B cell (primary cell): ENCODE measurements at regions of chr18 and their contacts with region 1.

Region 1: DNA sequence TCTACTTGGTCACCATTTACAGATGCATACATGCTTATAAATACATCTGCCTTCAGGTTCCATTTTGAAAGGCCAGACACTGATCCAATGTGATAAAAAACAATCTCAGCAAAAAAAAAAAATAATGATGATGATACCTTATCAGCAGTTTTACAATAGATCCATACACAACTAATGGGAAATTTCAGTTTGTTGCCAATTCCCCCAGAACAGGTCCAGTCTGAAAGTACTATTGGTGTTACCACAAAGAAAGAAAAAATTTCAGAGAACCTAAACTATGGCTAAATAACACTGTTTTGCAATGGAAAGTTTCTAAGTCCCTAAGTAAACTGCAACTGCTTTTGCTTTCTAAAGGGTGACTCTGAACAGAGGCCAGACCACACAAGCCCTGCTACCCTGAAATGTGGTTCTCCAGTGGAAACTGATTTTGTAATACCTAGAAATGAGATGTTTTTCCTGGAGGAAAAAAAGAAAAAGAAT is 54.1 kb downstream of the LPIN2 start:
- DNase-seq: peak; percentile 30
- ATAC-seq: peak; percentile 15
- H3K4me3 ChIP-seq: peak overlapping the region in 1 of 5 experiments; percentile 42
- H3K4me3 Mint-ChIP-seq: peak overlapping the region; percentile 50
- H3K27ac ChIP-seq: peak overlapping the region; percentile 82 to 84
- H3K27ac Mint-ChIP-seq: peak overlapping the region; percentile 91
- H3K4me1 ChIP-seq: peaks cover 70 to 75% of the 10 kb centered on the region in 2 donors
- H3K4me1 Mint-ChIP-seq: peaks cover 74% of the 10 kb centered on the region
- H3K27me3 ChIP-seq: no peaks in the 10 kb centered on the region
- H3K27me3 Mint-ChIP-seq: no peaks in the 10 kb centered on the region
- CTCF ChIP-seq: no peak

Region 2: GRCh38 chr18:2920546-2921343 is 38.1 kb before region 1 on chr18:
- CTCF ChIA-PET with region 1: no interaction called
- POLR2A ChIA-PET with region 1: no interaction called
- intact Hi-C with region 1: no loop called
- DNase-seq: no peak
- ATAC-seq: no peak
- H3K4me3 ChIP-seq: no peak overlapping the region
- H3K4me3 Mint-ChIP-seq: no peak overlapping the region
- H3K27ac ChIP-seq: no peak overlapping the region
- H3K27ac Mint-ChIP-seq: peak overlapping the region; percentile 32
- H3K4me1 ChIP-seq: peaks cover 21 to 26% of the 10 kb centered on the region in 2 donors
- H3K4me1 Mint-ChIP-seq: peaks cover 28% of the 10 kb centered on the region
- H3K27me3 ChIP-seq: no peaks in the 10 kb centered on the region
- H3K27me3 Mint-ChIP-seq: no peaks in the 10 kb centered on the region
- CTCF ChIP-seq: no peak

Region 3: GRCh38 chr18:2932247-2933181 is 26.3 kb before region 1 on chr18:
- CTCF ChIA-PET with region 1: interaction called, 13 read pairs
- POLR2A ChIA-PET with region 1: no interaction called
- intact Hi-C with region 1: loop called (anchors 2 kb)
- DNase-seq: peak; percentile 78
- ATAC-seq: peak; percentile 73
- H3K4me3 ChIP-seq: no peak overlapping the region
- H3K4me3 Mint-ChIP-seq: no peak overlapping the region
- H3K27ac ChIP-seq: no peak overlapping the region
- H3K27ac Mint-ChIP-seq: peak overlapping the region; percentile 64
- H3K4me1 ChIP-seq: peaks cover 0 to 4% of the 10 kb centered on the region in 2 donors
- H3K4me1 Mint-ChIP-seq: peaks cover 8% of the 10 kb centered on the region
- H3K27me3 ChIP-seq: no peaks in the 10 kb centered on the region
- H3K27me3 Mint-ChIP-seq: no peaks in the 10 kb centered on the region
- CTCF ChIP-seq: peak; percentile 92

Region 4: GRCh38 chr18:2978646-2979045 is 19.8 kb after region 1 on chr18:
- CTCF ChIA-PET with region 1: interaction called, 79 read pairs
- POLR2A ChIA-PET with region 1: interaction called, 6 read pairs
- intact Hi-C with region 1: loop called (anchors 1 kb)
- DNase-seq: peak; percentile 35
- ATAC-seq: no peak
- H3K4me3 ChIP-seq: peak overlapping the region in 2 of 5 experiments; percentile 5 to 46
- H3K4me3 Mint-ChIP-seq: peak overlapping the region; percentile 77
- H3K27ac ChIP-seq: peak overlapping the region; percentile 78 to 91
- H3K27ac Mint-ChIP-seq: peak overlapping the region; percentile 94
- H3K4me1 ChIP-seq: peaks cover 58 to 61% of the 10 kb centered on the region in 2 donors
- H3K4me1 Mint-ChIP-seq: peaks cover 67% of the 10 kb centered on the region
- H3K27me3 ChIP-seq: no peaks in the 10 kb centered on the region
- H3K27me3 Mint-ChIP-seq: no peaks in the 10 kb centered on the region
- CTCF ChIP-seq: no peak

Region 5: GRCh38 chr18:2994603-2995432 is 36.0 kb after region 1 on chr18:
- CTCF ChIA-PET with region 1: interaction called, 11 read pairs
- POLR2A ChIA-PET with region 1: interaction called, 6 read pairs
- intact Hi-C with region 1: no loop called
- DNase-seq: peak; percentile 81
- ATAC-seq: peak; percentile 95
- H3K4me3 ChIP-seq: peak overlapping the region in 3 of 5 experiments; percentile 12 to 38 (median 21)
- H3K4me3 Mint-ChIP-seq: peak overlapping the region; percentile 50
- H3K27ac ChIP-seq: peak overlapping the region in 1 of 2 donors; percentile 4
- H3K27ac Mint-ChIP-seq: peak overlapping the region; percentile 29
- H3K4me1 ChIP-seq: peaks cover 9 to 14% of the 10 kb centered on the region in 2 donors
- H3K4me1 Mint-ChIP-seq: peaks cover 35% of the 10 kb centered on the region
- H3K27me3 ChIP-seq: no peaks in the 10 kb centered on the region
- H3K27me3 Mint-ChIP-seq: no peaks in the 10 kb centered on the region
- CTCF ChIP-seq: peak; percentile 68

Region 6: GRCh38 chr18:3177902-3178687 is 219.2 kb after region 1 on chr18:
- CTCF ChIA-PET with region 1: interaction called, 3 read pairs
- POLR2A ChIA-PET with region 1: interaction called, 6 read pairs
- intact Hi-C with region 1: loop called (anchors 2 kb)
- DNase-seq: peak; percentile 95
- ATAC-seq: peak; percentile 84
- H3K4me3 ChIP-seq: peak overlapping the region in 3 of 5 experiments; percentile 37 to 59 (median 44)
- H3K4me3 Mint-ChIP-seq: peak overlapping the region; percentile 77
- H3K27ac ChIP-seq: peak overlapping the region; percentile 53 to 78
- H3K27ac Mint-ChIP-seq: peak overlapping the region; percentile 97
- H3K4me1 ChIP-seq: peaks cover 20 to 27% of the 10 kb centered on the region in 2 donors
- H3K4me1 Mint-ChIP-seq: peaks cover 28% of the 10 kb centered on the region
- H3K27me3 ChIP-seq: no peaks in the 10 kb centered on the region
- H3K27me3 Mint-ChIP-seq: no peaks in the 10 kb centered on the region
- CTCF ChIP-seq: no peak